ENCODE measurements at regions of chr18 and their contacts with region 1.

Region 1: GRCh38 chr18:6088432-6088831 is 193.1 kb upstream of the TMEM200C start:
- ATAC-seq: no peak
- H3K4me3 ChIP-seq: no peak overlapping the region
- H3K27ac ChIP-seq: no peak overlapping the region
- H3K4me1 ChIP-seq: no peaks in the 10 kb centered on the region

Region 2: GRCh38 chr18:5975111-5976002 is 113.1 kb before region 1 on chr18:
- in situ Hi-C with region 1: loop called in 1 of 9 experiments (anchors 25 kb)
- ATAC-seq: peak in 4 of 8 experiments; percentile 29 to 75 (median 71)
- H3K4me3 ChIP-seq: no peak overlapping the region
- H3K27ac ChIP-seq: no peak overlapping the region
- H3K4me1 ChIP-seq: peaks cover 7 to 8% of the 10 kb centered on the region in 2 donors

Region 3: DNA sequence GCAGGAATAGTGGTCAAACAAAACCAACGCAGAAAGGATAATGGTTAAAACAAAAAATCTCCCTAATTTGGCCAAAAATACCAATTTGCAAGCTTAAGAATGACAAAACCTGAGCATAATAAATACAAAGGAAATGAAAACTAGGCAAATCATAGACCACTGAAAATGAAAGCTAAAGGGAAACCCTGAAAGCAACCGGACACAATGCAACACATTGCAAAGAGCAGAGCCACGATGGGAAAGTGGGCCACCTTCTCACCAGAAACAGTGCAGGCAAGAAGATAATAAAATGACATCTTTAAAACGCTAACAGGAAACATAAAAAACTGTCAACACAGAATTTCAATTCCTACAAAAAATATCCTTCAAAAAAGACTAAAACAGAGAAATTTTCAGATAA is 86.6 kb after region 1 on chr18:
- in situ Hi-C with region 1: no loop called
- ATAC-seq: no peak
- H3K4me3 ChIP-seq: no peak overlapping the region
- H3K27ac ChIP-seq: no peak overlapping the region
- H3K4me1 ChIP-seq: no peaks in the 10 kb centered on the region

Region 4: GRCh38 chr18:6397931-6398566 is 309.6 kb after region 1 on chr18:
- in situ Hi-C with region 1: no loop called
- ATAC-seq: no peak
- H3K4me3 ChIP-seq: no peak overlapping the region
- H3K27ac ChIP-seq: no peak overlapping the region
- H3K4me1 ChIP-seq: no peaks in the 10 kb centered on the region

Measured in motor neuron (in vitro differentiated cells).